ENCODE measurements at regions of chr21 and their contacts with region 1.

Region 1: DNA sequence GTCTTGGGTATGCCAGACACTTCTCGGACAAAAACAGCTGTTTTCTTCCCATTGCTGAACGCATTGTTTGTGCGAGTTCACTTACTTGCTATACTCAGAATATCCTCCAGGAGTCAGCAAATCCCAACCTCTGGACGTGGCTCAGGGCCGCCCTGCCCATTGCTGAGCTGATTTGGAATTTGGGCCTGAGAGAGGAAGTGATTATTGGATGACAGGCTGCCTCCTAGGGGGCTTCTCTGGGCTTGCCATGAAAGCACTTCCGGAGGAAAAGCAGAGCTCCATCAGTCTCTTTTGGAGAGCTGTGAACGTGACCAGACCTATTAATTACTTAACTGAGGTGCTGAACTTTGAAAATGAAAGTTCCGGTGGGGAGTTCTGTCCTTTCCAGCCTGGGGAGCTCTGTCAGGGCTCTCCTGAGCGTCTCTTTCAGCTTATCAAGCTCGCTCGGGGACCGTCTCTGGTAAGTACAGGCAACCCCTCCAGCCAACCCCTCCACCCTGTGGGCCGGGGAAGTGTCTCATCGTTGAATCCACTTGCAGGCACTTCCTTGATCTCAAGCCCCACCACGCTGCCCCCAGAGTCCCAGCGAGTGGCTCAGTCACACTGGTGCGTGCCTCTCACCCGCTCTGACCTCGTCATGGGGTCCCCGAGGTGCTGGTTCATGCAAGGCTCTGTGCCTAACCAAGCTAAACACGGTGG is 76.9 kb downstream of the CLIC6 start:
- DNase-seq: peak; percentile 86
- ATAC-seq: peak; percentile 99
- H3K4me3 ChIP-seq: no peak overlapping the region
- H3K27ac ChIP-seq: peak overlapping the region; percentile 3; the same call in 1 of the 2 replicates
- H3K4me1 ChIP-seq: 0 out of 2 replicates have a peak, but pooled peaks cover 4% of the 10 kb centered on the region
- H3K27me3 ChIP-seq: no peaks in the 10 kb centered on the region; the same call in 1 of the 2 replicates
- CTCF ChIP-seq: peak; percentile 98
- POLR2A ChIP-seq: peak; percentile 66
- RAD21 ChIP-seq: peak; percentile 99

Region 2: GRCh38 chr21:34510148-34511142 is 235.3 kb before region 1 on chr21:
- CTCF ChIA-PET with region 1: no interaction called
- POLR2A ChIA-PET with region 1: no interaction called
- dilution Hi-C with region 1: no loop called
- in situ Hi-C with region 1: no loop called
- intact Hi-C with region 1: no loop called
- DNase-seq: peak; percentile 68
- ATAC-seq: peak; percentile 85
- H3K4me3 ChIP-seq: no peak overlapping the region
- H3K27ac ChIP-seq: no peak overlapping the region
- H3K4me1 ChIP-seq: peaks cover 1% of the 10 kb centered on the region; the same call in 1 of the 2 replicates
- H3K27me3 ChIP-seq: no peaks in the 10 kb centered on the region
- CTCF ChIP-seq: peak; percentile 92
- POLR2A ChIP-seq: peak; percentile 34; the same call in 1 of the 2 replicates
- RAD21 ChIP-seq: peak; percentile 95

Region 3: GRCh38 chr21:34693192-34693810 is 52.4 kb before region 1 on chr21:
- CTCF ChIA-PET with region 1: interaction called, 5 read pairs
- POLR2A ChIA-PET with region 1: no interaction called
- dilution Hi-C with region 1: no loop called
- in situ Hi-C with region 1: no loop called
- intact Hi-C with region 1: loop called (anchors 1 kb)
- DNase-seq: peak; percentile 74
- ATAC-seq: peak; percentile 80
- H3K4me3 ChIP-seq: no peak overlapping the region
- H3K27ac ChIP-seq: no peak overlapping the region
- H3K4me1 ChIP-seq: no peaks in the 10 kb centered on the region
- H3K27me3 ChIP-seq: peaks cover 36% of the 10 kb centered on the region
- CTCF ChIP-seq: peak; percentile 84
- POLR2A ChIP-seq: no peak
- RAD21 ChIP-seq: peak; percentile 89

Region 4: GRCh38 chr21:34874684-34875513 is 129.2 kb after region 1 on chr21:
- CTCF ChIA-PET with region 1: no interaction called
- POLR2A ChIA-PET with region 1: interaction called, 7 read pairs
- dilution Hi-C with region 1: no loop called
- in situ Hi-C with region 1: loop called (anchors 5 kb)
- intact Hi-C with region 1: no loop called
- DNase-seq: no peak
- ATAC-seq: no peak
- H3K4me3 ChIP-seq: no peak overlapping the region
- H3K27ac ChIP-seq: peak overlapping the region; percentile 34; the same call in 1 of the 2 replicates
- H3K4me1 ChIP-seq: peaks cover 32% of the 10 kb centered on the region
- H3K27me3 ChIP-seq: no peaks in the 10 kb centered on the region
- CTCF ChIP-seq: no peak
- POLR2A ChIP-seq: no peak; the same call in 1 of the 2 replicates
- RAD21 ChIP-seq: no peak

Region 5: DNA sequence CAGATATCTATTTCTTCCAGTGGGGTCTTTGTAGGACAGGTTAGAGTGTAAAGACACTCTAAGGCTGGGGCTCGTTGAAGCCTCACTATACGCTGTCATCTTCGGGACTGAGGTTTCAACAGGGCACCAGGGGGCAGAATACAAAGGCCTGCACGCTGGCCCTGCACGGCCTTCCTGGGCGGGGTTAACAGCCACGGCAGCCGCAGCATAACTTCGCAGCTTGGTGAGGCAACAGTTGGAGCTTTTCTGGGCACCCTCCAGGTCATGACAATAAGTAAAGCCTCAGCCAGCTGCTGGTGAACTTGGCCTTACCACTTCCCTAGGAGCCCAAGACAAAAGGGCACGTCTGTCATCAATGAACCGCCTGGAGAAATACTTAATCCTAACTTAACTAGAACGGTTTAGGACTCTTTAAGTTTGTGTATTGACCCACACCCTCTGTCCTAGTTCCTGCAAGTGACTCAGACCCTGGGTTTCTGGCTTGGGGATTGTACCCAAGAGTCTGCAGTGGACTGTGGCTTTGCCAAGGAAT is 305.6 kb after region 1 on chr21:
- CTCF ChIA-PET with region 1: interaction called, 5 read pairs
- POLR2A ChIA-PET with region 1: no interaction called
- dilution Hi-C with region 1: no loop called
- in situ Hi-C with region 1: no loop called
- intact Hi-C with region 1: loop called (anchors 10 kb)
- DNase-seq: peak; percentile 80
- ATAC-seq: peak; percentile 63
- H3K4me3 ChIP-seq: no peak overlapping the region
- H3K27ac ChIP-seq: peak overlapping the region; percentile 42
- H3K4me1 ChIP-seq: peaks cover 29% of the 10 kb centered on the region
- H3K27me3 ChIP-seq: no peaks in the 10 kb centered on the region
- CTCF ChIP-seq: peak; percentile 61
- POLR2A ChIP-seq: no peak
- RAD21 ChIP-seq: peak; percentile 67

Region 6: GRCh38 chr21:35400233-35400957 is 654.7 kb after region 1 on chr21:
- CTCF ChIA-PET with region 1: no interaction called
- POLR2A ChIA-PET with region 1: no interaction called
- dilution Hi-C with region 1: no loop called
- in situ Hi-C with region 1: loop called (anchors 25 kb)
- intact Hi-C with region 1: loop called (anchors 5 kb)
- DNase-seq: peak; percentile 67
- ATAC-seq: peak; percentile 53; the same call in 1 of the 2 replicates
- H3K4me3 ChIP-seq: no peak overlapping the region
- H3K27ac ChIP-seq: no peak overlapping the region
- H3K4me1 ChIP-seq: peaks cover 8% of the 10 kb centered on the region
- H3K27me3 ChIP-seq: no peaks in the 10 kb centered on the region
- CTCF ChIP-seq: peak; percentile 61
- POLR2A ChIP-seq: 0 out of 2 replicates have a peak, but pooled peaks have one; percentile 25
- RAD21 ChIP-seq: peak; percentile 78

Region 7: DNA sequence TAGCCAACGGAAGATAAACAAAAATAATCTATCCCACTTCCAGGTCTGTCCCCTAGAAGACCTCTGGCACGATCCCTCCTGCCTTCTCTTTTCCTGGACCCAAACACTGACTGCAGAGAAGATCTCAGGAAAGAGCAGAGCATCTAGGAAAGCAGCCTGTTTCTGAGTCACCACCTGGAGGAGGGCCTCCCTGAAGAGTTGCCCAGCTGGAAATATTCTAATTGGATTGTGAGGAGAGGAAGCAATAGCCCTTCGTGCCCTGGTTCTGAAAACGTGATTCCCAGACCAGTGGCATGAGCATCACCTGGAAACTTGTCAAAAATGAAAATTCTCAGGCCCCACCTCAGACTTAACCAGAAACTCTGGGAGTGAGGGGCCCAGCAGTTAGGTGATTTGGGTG is 903.5 kb after region 1 on chr21:
- CTCF ChIA-PET with region 1: no interaction called
- POLR2A ChIA-PET with region 1: no interaction called
- dilution Hi-C with region 1: no loop called
- in situ Hi-C with region 1: no loop called
- intact Hi-C with region 1: loop called (anchors 10 kb)
- DNase-seq: peak; percentile 70
- ATAC-seq: peak; percentile 93
- H3K4me3 ChIP-seq: no peak overlapping the region
- H3K27ac ChIP-seq: no peak overlapping the region
- H3K4me1 ChIP-seq: peaks cover 8% of the 10 kb centered on the region
- H3K27me3 ChIP-seq: no peaks in the 10 kb centered on the region
- CTCF ChIP-seq: no peak
- POLR2A ChIP-seq: no peak
- RAD21 ChIP-seq: no peak

Region 8: DNA sequence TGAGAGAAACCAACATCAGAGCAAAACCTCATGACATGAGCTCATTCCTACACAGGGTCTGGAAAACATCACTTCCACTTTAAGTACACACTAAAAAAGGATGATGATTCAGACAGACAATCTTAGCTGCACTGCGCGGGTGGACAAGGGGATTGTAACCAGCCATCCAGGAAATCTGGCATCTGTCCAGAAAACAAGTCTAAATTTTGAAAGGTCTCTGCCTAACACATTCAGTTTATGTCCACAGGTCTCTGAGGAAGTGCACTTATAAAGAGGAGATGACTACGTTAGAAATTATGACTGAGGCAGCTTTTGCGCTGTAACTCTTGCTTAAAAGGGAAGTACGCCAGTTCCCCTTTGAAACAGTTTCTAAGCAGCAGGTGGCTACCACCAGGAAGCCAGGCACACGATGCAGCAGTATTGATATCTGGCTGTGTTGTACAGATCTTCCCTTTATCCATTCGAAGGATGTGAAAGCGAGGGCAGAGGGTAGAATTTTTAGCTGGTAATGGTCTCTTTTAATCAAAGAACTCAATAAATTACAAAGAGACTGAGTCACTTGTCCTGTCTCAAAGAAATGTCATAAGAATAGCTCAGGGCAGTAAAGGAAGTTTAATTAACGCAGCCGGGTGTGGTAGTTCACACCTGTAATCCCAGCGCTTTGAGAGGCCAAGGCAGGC is 1186.7 kb after region 1 on chr21:
- CTCF ChIA-PET with region 1: no interaction called
- POLR2A ChIA-PET with region 1: no interaction called
- dilution Hi-C with region 1: no loop called
- in situ Hi-C with region 1: loop called (anchors 25 kb)
- intact Hi-C with region 1: no loop called
- DNase-seq: peak; percentile 95
- ATAC-seq: peak; percentile 86
- H3K4me3 ChIP-seq: peak overlapping the region; percentile 16; the same call in 1 of the 2 replicates
- H3K27ac ChIP-seq: peak overlapping the region; percentile 57
- H3K4me1 ChIP-seq: peaks cover 7% of the 10 kb centered on the region; the same call in 1 of the 2 replicates
- H3K27me3 ChIP-seq: no peaks in the 10 kb centered on the region
- CTCF ChIP-seq: no peak
- POLR2A ChIP-seq: 0 out of 2 replicates have a peak, but pooled peaks have one; percentile 30
- RAD21 ChIP-seq: no peak; the same call in 1 of the 2 replicates